ENCODE measurements at regions of chr17 and their contacts with region 1.

Region 1: DNA sequence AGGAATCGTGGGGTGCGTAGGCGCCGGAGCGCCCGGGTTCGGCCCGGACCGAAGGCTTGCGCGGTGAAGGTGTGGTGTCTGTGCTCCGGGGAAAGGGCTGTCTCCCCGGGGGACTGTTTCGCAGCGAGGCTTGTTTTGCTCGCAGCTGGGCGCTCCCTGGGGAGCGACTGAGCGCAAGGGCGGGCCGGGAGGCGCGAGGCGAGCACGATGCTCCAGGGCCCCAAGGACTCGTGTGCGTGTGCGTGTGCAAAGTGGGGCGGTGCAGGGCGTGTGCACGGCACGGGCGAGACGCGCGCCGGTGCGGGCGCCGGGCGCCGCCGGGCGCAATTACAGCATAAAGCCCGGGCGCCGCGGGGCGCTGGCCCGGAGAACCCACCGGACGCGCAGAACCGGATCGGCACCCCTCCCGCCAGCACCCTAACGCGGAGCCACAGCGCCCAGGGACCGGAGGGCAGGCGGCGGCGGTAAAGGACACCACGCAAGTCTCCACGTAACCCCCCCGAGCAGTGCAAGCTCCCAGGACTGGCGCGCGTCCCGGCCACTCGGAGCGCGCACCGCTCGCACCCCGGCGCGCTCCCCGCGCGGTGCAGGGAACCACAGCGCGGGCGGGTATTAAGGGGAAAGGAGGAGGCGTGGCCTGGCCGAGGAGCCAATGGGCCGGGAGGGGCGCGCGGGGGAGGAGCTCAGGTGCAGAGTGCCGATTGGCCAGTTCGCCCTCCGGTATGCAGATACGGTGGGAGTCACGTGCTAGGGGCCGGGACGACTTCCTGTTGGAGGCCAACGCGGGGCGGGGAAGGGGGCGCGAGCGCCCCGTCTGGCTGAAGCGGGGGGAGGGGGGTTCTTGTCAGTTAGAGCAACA is at the start of gene TNRC6C:
- DNase-seq: peak; percentile 99 to 100 (median 100)
- ATAC-seq: peak; percentile 85
- H3K4me3 ChIP-seq: peak within 1 kb of the TSS; percentile 95
- H3K4me3 Mint-ChIP-seq: peak within 1 kb of the TSS; percentile 96
- H3K27ac ChIP-seq: peak within 1 kb of the TSS; percentile 44 to 76
- H3K27ac Mint-ChIP-seq: peak within 1 kb of the TSS; percentile 94
- H3K4me1 ChIP-seq: peaks cover 36% of the 10 kb centered on the region
- H3K4me1 Mint-ChIP-seq: peaks cover 44% of the 10 kb centered on the region
- H3K27me3 ChIP-seq: no peaks in the 10 kb centered on the region
- H3K27me3 Mint-ChIP-seq: no peaks in the 10 kb centered on the region
- CTCF ChIP-seq: no peak
- total RNA-seq, gene TNRC6C: 50.7 to 57.3 TPM

Region 2: GRCh38 chr17:77382966-77383612 is 575.0 kb before region 1 on chr17:
- CTCF ChIA-PET with region 1: no interaction called
- POLR2A ChIA-PET with region 1: interaction called, 10 read pairs
- intact Hi-C with region 1: no loop called
- DNase-seq: no peak
- ATAC-seq: peak; percentile 9
- H3K4me3 ChIP-seq: peak overlapping the region; percentile 41
- H3K4me3 Mint-ChIP-seq: peak overlapping the region; percentile 50
- H3K27ac ChIP-seq: peak overlapping the region in 1 of 2 donors; percentile 32
- H3K27ac Mint-ChIP-seq: peak overlapping the region; percentile 93
- H3K4me1 ChIP-seq: peaks cover 100% of the 10 kb centered on the region
- H3K4me1 Mint-ChIP-seq: peaks cover 93% of the 10 kb centered on the region
- H3K27me3 ChIP-seq: no peaks in the 10 kb centered on the region
- H3K27me3 Mint-ChIP-seq: no peaks in the 10 kb centered on the region
- CTCF ChIP-seq: no peak

Region 3: GRCh38 chr17:77645072-77646045 is 312.7 kb before region 1 on chr17:
- CTCF ChIA-PET with region 1: interaction called, 5 read pairs
- POLR2A ChIA-PET with region 1: interaction called, 32 read pairs
- intact Hi-C with region 1: no loop called
- DNase-seq: peak; percentile 25 to 75 (median 52)
- ATAC-seq: peak; percentile 88
- H3K4me3 ChIP-seq: peak overlapping the region; percentile 49
- H3K4me3 Mint-ChIP-seq: peak overlapping the region; percentile 68
- H3K27ac ChIP-seq: no peak overlapping the region
- H3K27ac Mint-ChIP-seq: peak overlapping the region; percentile 77
- H3K4me1 ChIP-seq: peaks cover 25% of the 10 kb centered on the region
- H3K4me1 Mint-ChIP-seq: peaks cover 20% of the 10 kb centered on the region
- H3K27me3 ChIP-seq: no peaks in the 10 kb centered on the region
- H3K27me3 Mint-ChIP-seq: no peaks in the 10 kb centered on the region
- CTCF ChIP-seq: peak; percentile 57

Region 4: DNA sequence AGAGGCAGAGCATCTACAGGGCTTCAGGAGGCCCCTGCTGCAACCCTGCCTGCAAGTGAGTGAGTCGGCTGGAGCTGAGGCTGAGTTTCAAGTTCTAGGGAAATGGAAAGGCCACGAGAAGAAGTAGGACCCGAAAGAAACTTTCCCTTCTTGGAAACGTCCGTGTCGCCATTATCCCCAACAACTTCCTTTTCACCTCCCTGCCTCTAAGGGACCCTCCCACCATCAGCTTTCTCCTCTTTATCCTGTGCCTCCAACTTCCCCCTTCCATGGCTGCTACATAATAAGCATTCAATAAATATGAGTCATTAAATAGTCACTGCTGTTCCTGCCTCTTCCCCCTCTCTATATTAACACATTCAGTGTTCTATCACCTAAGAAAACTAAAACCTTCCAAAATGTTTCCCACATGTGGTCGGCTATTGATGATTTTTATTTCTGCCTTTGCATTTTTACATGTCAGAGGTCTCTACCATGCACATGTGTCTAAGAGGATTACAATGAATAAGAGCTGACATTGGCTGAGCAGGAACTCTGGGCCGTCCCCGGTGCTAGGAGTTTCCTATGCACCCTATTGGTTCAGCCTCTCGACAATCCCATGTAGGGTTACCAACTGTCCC is 115.4 kb before region 1 on chr17:
- CTCF ChIA-PET with region 1: no interaction called
- POLR2A ChIA-PET with region 1: interaction called, 30 read pairs
- intact Hi-C with region 1: loop called in 1 of 2 experiments (anchors 1 kb)
- DNase-seq: peak in 3 of 14 experiments; percentile 25 to 66 (median 54)
- ATAC-seq: no peak
- H3K4me3 ChIP-seq: no peak overlapping the region
- H3K4me3 Mint-ChIP-seq: no peak overlapping the region
- H3K27ac ChIP-seq: no peak overlapping the region
- H3K27ac Mint-ChIP-seq: peak overlapping the region; percentile 92
- H3K4me1 ChIP-seq: peaks cover 61% of the 10 kb centered on the region
- H3K4me1 Mint-ChIP-seq: peaks cover 54% of the 10 kb centered on the region
- H3K27me3 ChIP-seq: no peaks in the 10 kb centered on the region
- H3K27me3 Mint-ChIP-seq: no peaks in the 10 kb centered on the region
- CTCF ChIP-seq: no peak

Region 5: GRCh38 chr17:77914385-77915254 is 43.5 kb before region 1 on chr17:
- CTCF ChIA-PET with region 1: interaction called, 3 read pairs
- POLR2A ChIA-PET with region 1: interaction called, 37 read pairs
- intact Hi-C with region 1: no loop called
- DNase-seq: peak in 5 of 14 experiments; percentile 11 to 40 (median 34)
- ATAC-seq: peak; percentile 24
- H3K4me3 ChIP-seq: no peak overlapping the region
- H3K4me3 Mint-ChIP-seq: no peak overlapping the region
- H3K27ac ChIP-seq: no peak overlapping the region
- H3K27ac Mint-ChIP-seq: no peak overlapping the region
- H3K4me1 ChIP-seq: peaks cover 9% of the 10 kb centered on the region
- H3K4me1 Mint-ChIP-seq: peaks cover 18% of the 10 kb centered on the region
- H3K27me3 ChIP-seq: peaks cover 16 to 25% of the 10 kb centered on the region in 2 experiments
- H3K27me3 Mint-ChIP-seq: peaks cover 46% of the 10 kb centered on the region
- CTCF ChIP-seq: peak; percentile 19

Region 6: GRCh38 chr17:78005452-78006171 is 47.5 kb after region 1 on chr17:
- CTCF ChIA-PET with region 1: interaction called, 6 read pairs
- POLR2A ChIA-PET with region 1: interaction called, 29 read pairs
- intact Hi-C with region 1: loop called (anchors 2 to 5 kb)
- DNase-seq: no peak
- ATAC-seq: no peak
- H3K4me3 ChIP-seq: no peak overlapping the region
- H3K4me3 Mint-ChIP-seq: no peak overlapping the region
- H3K27ac ChIP-seq: no peak overlapping the region
- H3K27ac Mint-ChIP-seq: peak overlapping the region; percentile 71
- H3K4me1 ChIP-seq: peaks cover 3% of the 10 kb centered on the region
- H3K4me1 Mint-ChIP-seq: peaks cover 62% of the 10 kb centered on the region
- H3K27me3 ChIP-seq: no peaks in the 10 kb centered on the region
- H3K27me3 Mint-ChIP-seq: no peaks in the 10 kb centered on the region
- CTCF ChIP-seq: no peak

Region 7: GRCh38 chr17:78147315-78147998 is 189.4 kb after region 1 on chr17:
- CTCF ChIA-PET with region 1: no interaction called
- POLR2A ChIA-PET with region 1: no interaction called
- intact Hi-C with region 1: no loop called
- DNase-seq: peak in 2 of 14 experiments; percentile 55 to 57
- ATAC-seq: peak; percentile 77
- H3K4me3 ChIP-seq: no peak overlapping the region
- H3K4me3 Mint-ChIP-seq: no peak overlapping the region
- H3K27ac ChIP-seq: peak overlapping the region in 1 of 2 donors; percentile 23
- H3K27ac Mint-ChIP-seq: peak overlapping the region; percentile 80
- H3K4me1 ChIP-seq: peaks cover 49% of the 10 kb centered on the region
- H3K4me1 Mint-ChIP-seq: peaks cover 26% of the 10 kb centered on the region
- H3K27me3 ChIP-seq: no peaks in the 10 kb centered on the region
- H3K27me3 Mint-ChIP-seq: no peaks in the 10 kb centered on the region
- CTCF ChIP-seq: no peak

Region 8: GRCh38 chr17:78176548-78177025 is 218.5 kb after region 1 on chr17:
- CTCF ChIA-PET with region 1: no interaction called
- POLR2A ChIA-PET with region 1: no interaction called
- intact Hi-C with region 1: loop called in 1 of 2 experiments (anchors 5 kb)
- DNase-seq: peak; percentile 59 to 88 (median 75)
- ATAC-seq: peak; percentile 86
- H3K4me3 ChIP-seq: no peak overlapping the region
- H3K4me3 Mint-ChIP-seq: no peak overlapping the region
- H3K27ac ChIP-seq: no peak overlapping the region
- H3K27ac Mint-ChIP-seq: no peak overlapping the region
- H3K4me1 ChIP-seq: peaks cover 53% of the 10 kb centered on the region
- H3K4me1 Mint-ChIP-seq: peaks cover 45% of the 10 kb centered on the region
- H3K27me3 ChIP-seq: no peaks in the 10 kb centered on the region
- H3K27me3 Mint-ChIP-seq: no peaks in the 10 kb centered on the region
- CTCF ChIP-seq: peak; percentile 87